Right ventricle myocardium superior (tissue), 1 donor: ENCODE measurements at regions of chr9 and their contacts with region 1.

Region 1: DNA sequence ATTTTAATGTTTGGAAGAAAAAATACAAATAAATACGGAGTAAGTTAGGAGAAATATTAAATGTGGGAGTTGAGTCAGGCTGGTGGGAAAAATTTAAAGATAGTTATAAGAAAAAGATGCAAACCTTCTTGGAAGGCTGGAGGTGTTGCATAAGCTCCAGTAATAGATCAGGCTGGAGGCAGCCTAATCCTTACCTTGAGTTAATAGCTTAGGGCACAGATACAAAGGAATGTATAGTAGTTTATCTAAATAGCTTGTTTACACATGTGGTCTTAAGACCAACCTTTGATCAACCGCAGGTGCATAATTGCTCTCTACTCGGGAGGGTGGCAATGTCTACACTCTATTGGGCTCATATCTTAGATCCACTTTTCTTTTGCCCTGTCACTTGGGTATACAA is 2.7 kb upstream of the INSL4 start:
- DNase-seq: no peak
- ATAC-seq: no peak

Region 2: DNA sequence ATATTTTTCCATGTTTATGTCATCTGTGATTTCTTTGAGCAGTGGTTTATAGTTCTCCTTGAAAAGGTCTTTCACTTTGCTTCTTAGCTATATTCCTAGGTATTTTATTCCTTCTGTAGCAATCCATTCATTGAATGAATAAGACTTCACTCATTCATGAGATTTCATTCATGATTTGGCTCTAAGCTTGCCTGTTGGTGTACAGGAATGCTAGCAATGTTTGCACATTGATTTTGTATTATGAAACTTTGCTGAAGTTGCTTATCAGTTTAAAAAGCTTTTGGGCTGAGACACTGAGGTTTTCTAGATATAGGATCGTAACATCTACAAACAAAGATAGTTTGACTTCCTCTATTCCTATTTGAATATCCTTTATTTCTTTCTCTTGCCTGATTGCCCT is 60.0 kb after region 1 on chr9:
- intact Hi-C with region 1: loop called (anchors 10 kb)
- DNase-seq: no peak
- ATAC-seq: no peak